ENCODE measurements at regions of chr22 and their contacts with region 1.

Region 1: DNA sequence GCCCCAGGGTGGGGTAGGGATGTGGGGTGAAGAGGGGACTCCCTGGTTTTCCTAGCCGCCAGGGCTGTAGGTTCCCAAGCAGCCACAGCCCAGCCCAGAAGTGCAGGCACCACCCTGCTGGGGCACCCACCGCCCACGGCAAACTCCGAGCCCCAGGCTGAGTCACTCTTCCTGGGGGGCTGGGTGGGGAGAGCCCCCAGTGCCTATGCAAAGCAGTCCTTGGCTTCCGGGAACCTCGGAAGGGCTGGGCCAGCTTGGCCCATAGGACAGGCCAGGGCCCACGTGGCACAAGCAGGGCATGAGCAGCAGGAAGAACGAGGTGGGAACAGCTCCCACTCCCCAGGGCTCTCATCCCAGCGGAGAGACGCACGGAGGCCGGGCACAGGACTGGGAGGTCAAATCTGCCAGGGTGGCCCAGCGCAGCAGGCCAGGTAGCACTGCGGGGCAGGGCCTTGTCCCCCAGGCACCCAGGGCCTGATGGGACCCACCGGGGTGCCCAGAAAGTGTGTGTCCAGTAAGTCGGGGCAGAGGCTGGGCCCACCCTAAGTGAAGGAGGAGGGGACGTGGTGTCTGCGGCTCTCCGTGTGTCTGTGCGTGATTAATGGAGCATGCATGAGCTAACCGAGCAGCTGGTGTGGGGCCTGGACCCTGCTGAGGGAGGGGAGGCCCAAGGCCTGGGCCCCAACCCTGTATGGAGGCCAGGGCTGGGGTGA is 4.6 kb upstream of the IL17REL start:
- DNase-seq: no peak
- H3K4me3 Mint-ChIP-seq: peak overlapping the region; percentile 19
- H3K27ac Mint-ChIP-seq: peak overlapping the region; percentile 45
- H3K4me1 Mint-ChIP-seq: peaks cover 9% of the 10 kb centered on the region
- H3K27me3 Mint-ChIP-seq: peaks cover 2% of the 10 kb centered on the region

Region 2: GRCh38 chr22:50004918-50005317 is 12.2 kb before region 1 on chr22:
- intact Hi-C with region 1: loop called (anchors 2 kb)
- DNase-seq: no peak
- H3K4me3 Mint-ChIP-seq: no peak overlapping the region
- H3K27ac Mint-ChIP-seq: peak overlapping the region; percentile 61
- H3K4me1 Mint-ChIP-seq: no peaks in the 10 kb centered on the region
- H3K27me3 Mint-ChIP-seq: peaks cover 4% of the 10 kb centered on the region

Region 3: GRCh38 chr22:50034126-50035081 is 17.3 kb after region 1 on chr22:
- intact Hi-C with region 1: no loop called
- DNase-seq: no peak
- H3K4me3 Mint-ChIP-seq: no peak overlapping the region
- H3K27ac Mint-ChIP-seq: no peak overlapping the region
- H3K4me1 Mint-ChIP-seq: no peaks in the 10 kb centered on the region
- H3K27me3 Mint-ChIP-seq: peaks cover 8% of the 10 kb centered on the region

Measured in activated T-helper 1 cell treated with anti-CD3 and anti-CD28 coated beads, Interleukin-12 subunit alpha, Interleukin-12 subunit beta, Interleukin-2, Interleukin-4 antibody, amounts not matched to agents 30 ng/mL and 10 ng/mL and 1 ng/mL, durations not matched to agents 14 hours and 24 hours and 36 hours (primary cell).